Posterior cingulate gyrus (tissue), 11 donors: ENCODE measurements at regions of chr17 and their contacts with region 1.

Region 1: GRCh38 chr17:68972119-68972704 is 17.0 kb upstream of the ABCA8 start:
- DNase-seq: peak in 1 of 10 donors; percentile 24

Region 2: DNA sequence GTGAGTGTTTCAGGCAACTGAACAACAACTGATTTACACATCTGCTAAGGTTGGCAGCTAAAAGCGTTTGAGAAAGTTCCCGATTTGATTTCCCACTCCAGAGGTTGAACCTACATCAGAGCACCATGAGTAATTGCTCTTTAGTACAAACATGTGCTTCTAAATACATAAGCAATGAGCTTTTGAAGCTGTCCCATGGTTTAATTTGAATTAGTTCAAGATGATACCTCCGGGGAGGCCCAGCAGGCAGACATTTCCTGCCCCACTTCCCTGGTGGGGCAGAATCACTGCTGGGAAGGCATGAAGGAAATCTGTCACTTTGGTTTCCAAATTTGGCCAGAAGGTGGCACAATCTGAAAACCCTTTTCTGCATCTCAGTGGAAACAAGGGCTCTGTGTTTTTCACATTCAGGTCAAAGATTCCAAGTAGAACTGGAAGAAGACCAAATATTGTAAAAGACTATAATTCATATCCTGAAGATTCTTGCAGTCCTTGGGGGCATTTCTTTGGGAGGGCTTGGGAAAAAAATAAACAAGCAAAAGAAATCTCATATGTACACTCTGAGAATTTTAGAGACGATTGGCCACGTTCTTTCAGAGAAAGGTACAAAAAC is 194.9 kb before region 1 on chr17:
- intact Hi-C with region 1: loop called (anchors 5 kb)
- DNase-seq: peak in 5 of 10 donors; percentile 10 to 70 (median 53)

Region 3: GRCh38 chr17:68794636-68795434 is 177.4 kb before region 1 on chr17:
- intact Hi-C with region 1: loop called (anchors 5 kb)
- DNase-seq: peak in 8 of 10 donors; percentile 27 to 94 (median 64)